ENCODE measurements at regions of chr21 and their contacts with region 1.

Region 1: DNA sequence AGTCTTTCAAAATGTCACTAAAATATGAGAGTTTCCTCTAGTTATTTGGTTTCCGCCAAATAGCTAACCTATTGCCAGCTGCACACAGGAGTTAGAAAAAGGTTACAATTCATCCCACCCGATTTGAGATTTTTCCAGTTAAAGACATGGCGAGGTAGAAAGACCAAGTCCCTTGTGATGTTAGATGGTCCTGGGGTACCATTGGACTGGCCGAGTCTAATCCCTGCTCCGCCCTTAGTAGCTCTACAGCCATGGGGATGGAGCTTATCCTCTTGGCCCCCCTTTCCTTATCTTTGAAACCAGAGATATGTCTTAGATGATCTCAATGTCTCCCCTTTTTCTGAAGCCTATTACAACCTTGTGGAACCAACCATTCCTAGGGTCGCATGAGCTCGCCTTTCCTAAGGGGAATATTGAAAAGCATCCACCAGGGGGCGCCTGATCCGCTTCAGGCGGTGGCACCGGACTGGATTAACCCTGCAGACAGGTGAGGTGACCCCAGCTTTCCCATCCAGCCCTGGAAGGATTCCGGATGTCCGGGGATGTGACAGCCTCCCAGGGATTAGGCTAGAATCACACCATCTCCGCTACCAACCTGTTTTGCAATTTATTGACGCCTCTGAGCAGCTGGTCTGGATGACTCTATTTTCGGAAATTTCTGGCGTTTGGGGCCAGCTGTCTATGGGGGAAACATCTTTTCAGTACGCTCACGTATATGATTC is 68.3 kb upstream of the SIM2 start:
- DNase-seq: peak; percentile 91
- ATAC-seq: peak; percentile 95
- H3K4me3 Mint-ChIP-seq: no peak overlapping the region
- H3K27ac Mint-ChIP-seq: no peak overlapping the region
- H3K4me1 Mint-ChIP-seq: peaks cover 11% of the 10 kb centered on the region
- H3K27me3 Mint-ChIP-seq: peaks cover 8% of the 10 kb centered on the region
- CTCF ChIP-seq: peak; percentile 89

Region 2: DNA sequence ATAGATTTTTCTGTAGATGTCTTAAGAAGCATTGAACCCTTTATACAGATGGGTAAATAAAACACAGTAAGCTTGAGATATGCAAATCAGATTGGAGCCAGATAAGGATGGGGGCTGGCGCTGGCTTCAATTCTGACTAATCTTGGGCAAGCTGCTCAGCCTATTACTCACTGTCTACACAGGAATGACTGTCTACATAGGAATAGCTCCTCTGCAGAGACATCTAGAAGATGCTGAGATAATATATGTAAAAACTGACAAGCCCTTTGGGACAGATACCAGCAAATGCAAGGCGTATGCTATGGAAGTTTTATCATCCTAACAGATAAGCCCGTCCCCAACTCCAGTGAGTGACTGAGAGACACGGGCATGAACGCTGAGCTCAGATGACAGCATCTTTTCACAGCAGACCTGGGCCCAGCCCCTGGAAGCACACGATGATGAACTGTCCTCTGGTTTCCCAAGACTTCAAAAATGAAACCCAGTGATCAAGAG is 152.4 kb before region 1 on chr21:
- CTCF ChIA-PET with region 1: interaction called, 13 read pairs
- POLR2A ChIA-PET with region 1: no interaction called
- DNase-seq: no peak
- ATAC-seq: no peak
- H3K4me3 Mint-ChIP-seq: no peak overlapping the region
- H3K27ac Mint-ChIP-seq: no peak overlapping the region
- H3K4me1 Mint-ChIP-seq: peaks cover 2% of the 10 kb centered on the region; the same call in 1 of the 2 replicates
- H3K27me3 Mint-ChIP-seq: no peaks in the 10 kb centered on the region
- CTCF ChIP-seq: no peak

Region 3: DNA sequence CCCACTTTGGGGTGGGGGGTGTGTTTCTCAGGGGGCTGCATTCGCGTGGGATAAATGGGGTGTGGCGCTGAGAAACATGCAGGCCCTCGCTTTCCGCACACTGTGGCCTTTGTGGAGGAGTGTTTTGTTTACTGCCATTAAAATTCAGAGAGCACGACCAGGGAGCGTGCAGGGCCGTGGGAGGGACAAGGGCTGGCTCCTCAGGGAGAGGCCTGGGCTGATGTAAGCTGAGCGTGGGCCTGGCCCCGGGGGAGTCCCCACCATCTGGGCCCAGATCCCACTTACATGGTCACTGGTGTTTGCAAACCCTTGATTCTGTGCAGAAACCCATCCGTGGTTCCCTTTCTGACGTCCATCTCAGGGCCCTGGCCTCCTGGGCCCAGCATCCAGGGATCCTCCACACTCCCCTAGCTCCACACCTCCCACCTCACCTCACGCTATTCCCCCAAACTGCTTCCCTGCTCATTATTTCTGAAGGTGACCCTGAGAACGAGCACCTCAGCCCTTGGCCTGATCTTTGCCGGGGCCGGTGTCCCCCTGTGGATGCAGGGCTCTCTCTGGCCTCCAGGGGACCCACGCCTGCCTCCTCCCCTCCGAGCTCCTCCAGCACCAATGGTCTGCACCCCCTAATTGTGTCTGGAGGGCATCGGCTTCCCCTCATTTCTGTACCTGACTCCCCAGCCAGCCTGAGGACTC is 24.2 kb before region 1 on chr21:
- CTCF ChIA-PET with region 1: interaction called, 20 read pairs
- POLR2A ChIA-PET with region 1: no interaction called
- DNase-seq: peak; percentile 32
- ATAC-seq: peak; percentile 79
- H3K4me3 Mint-ChIP-seq: no peak overlapping the region
- H3K27ac Mint-ChIP-seq: no peak overlapping the region
- H3K4me1 Mint-ChIP-seq: peaks cover 11% of the 10 kb centered on the region
- H3K27me3 Mint-ChIP-seq: no peaks in the 10 kb centered on the region
- CTCF ChIP-seq: no peak

Region 4: GRCh38 chr21:36647279-36648093 is 16.8 kb after region 1 on chr21:
- CTCF ChIA-PET with region 1: interaction called, 32 read pairs
- POLR2A ChIA-PET with region 1: no interaction called
- DNase-seq: peak; percentile 33
- ATAC-seq: peak; percentile 91
- H3K4me3 Mint-ChIP-seq: no peak overlapping the region
- H3K27ac Mint-ChIP-seq: peak overlapping the region; percentile 59
- H3K4me1 Mint-ChIP-seq: peaks cover 15% of the 10 kb centered on the region
- H3K27me3 Mint-ChIP-seq: peaks cover 2% of the 10 kb centered on the region; the same call in 1 of the 2 replicates
- CTCF ChIP-seq: no peak

Region 5: DNA sequence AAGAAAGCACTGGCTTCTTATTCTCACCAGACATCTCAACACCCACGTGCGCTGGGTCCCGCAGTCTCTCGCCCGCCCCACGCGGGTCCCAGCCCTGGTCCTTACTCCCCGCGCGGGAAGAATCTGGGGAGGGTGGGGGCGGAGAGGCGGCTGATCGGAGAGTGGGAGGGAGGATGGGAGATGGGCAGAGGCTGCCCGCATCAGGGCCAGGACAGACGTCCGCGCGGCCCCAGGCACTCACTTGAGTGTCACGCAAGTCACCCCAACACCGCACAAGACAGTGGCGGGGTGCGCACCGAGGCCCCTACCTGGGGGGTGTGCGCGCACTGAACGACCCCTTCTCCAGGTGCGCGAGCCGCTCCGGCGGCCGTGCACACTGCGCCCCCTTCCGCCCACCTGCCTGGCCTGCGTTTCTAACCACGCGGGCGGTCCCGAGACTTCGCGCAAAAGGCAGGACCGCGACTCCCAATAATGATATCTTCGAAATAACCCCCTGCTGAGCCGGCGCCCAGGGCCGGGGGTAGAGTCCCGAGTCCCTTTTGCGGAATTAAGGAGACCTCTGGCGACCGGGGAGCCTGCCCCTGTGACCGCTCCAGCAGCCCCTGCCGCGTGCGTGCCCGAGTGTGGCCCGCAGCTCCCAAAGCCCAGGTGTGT is 62.3 kb after region 1 on chr21:
- CTCF ChIA-PET with region 1: interaction called, 52 read pairs
- POLR2A ChIA-PET with region 1: no interaction called
- DNase-seq: peak; percentile 67
- ATAC-seq: peak; percentile 17
- H3K4me3 Mint-ChIP-seq: peak overlapping the region; percentile 52
- H3K27ac Mint-ChIP-seq: no peak overlapping the region
- H3K4me1 Mint-ChIP-seq: peaks cover 51% of the 10 kb centered on the region
- H3K27me3 Mint-ChIP-seq: peaks cover 98% of the 10 kb centered on the region
- CTCF ChIP-seq: peak; percentile 54

Region 6: GRCh38 chr21:36917471-36918158 is 287.0 kb after region 1 on chr21:
- CTCF ChIA-PET with region 1: interaction called, 18 read pairs
- POLR2A ChIA-PET with region 1: no interaction called
- DNase-seq: peak; percentile 43
- ATAC-seq: peak; percentile 81
- H3K4me3 Mint-ChIP-seq: no peak overlapping the region
- H3K27ac Mint-ChIP-seq: no peak overlapping the region
- H3K4me1 Mint-ChIP-seq: peaks cover 46% of the 10 kb centered on the region
- H3K27me3 Mint-ChIP-seq: no peaks in the 10 kb centered on the region
- CTCF ChIP-seq: 0 out of 2 replicates have a peak, but pooled peaks have one; percentile 14

Measured in WTC11 (cell line).